Aorta (tissue), 5 donors: ENCODE measurements at regions of chr6 and their contacts with region 1.

Region 1: DNA sequence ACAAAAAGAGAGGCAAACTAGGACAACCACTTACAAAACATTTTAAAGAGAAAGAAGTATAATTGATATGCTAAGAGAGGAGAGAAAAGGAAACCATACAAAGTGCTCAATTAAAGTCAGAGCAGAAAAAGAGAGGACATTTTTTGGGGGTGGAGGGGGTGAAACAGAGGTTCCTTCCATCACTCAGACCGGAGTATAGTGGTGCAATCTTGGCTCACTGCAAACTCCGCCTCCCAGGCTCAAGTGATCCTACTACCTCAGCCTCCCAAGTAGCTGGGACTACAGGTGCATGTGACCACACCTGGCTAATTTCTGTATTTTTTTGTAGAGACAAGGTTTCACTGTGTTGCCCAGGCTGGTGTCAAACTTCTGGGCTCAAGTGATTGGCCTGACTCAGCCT is 9.4 kb downstream of the WASF1 start:
- DNase-seq: no peak
- ATAC-seq: no peak
- H3K4me3 ChIP-seq: no peak overlapping the region
- H3K27ac ChIP-seq: no peak overlapping the region
- H3K4me1 ChIP-seq: no peaks in the 10 kb centered on the region
- H3K27me3 ChIP-seq: no peaks in the 10 kb centered on the region

Region 2: DNA sequence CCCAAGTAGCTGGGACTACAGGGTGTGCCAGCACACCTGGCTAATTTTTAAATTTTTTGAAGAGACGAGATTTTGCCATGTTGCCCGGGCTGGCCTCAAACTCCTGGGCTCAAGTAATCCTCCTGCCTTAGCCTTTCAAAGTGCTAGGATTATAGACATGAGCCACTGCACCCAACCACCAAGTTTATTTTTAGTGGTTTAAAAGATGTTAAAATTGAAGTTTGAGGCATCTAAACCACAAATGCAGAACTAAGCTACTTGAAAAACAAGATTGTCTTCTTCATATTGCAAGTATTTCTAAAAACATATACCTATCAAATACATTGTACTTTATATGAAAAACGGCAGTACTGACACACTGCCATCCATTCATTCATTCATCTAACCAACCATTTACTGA is 22.2 kb before region 1 on chr6:
- intact Hi-C with region 1: loop called in 1 of 2 experiments (anchors 2 kb)
- DNase-seq: no peak
- ATAC-seq: no peak
- H3K4me3 ChIP-seq: no peak overlapping the region
- H3K27ac ChIP-seq: no peak overlapping the region
- H3K4me1 ChIP-seq: no peaks in the 10 kb centered on the region
- H3K27me3 ChIP-seq: no peaks in the 10 kb centered on the region